Mucosa of descending colon (tissue), 3 donors: ENCODE measurements at regions of chr9 and their contacts with region 1.

Region 1: GRCh38 chr9:135085830-135086546 is 1.5 kb upstream of the OLFM1 start:
- DNase-seq: peak; percentile 67 to 89 (median 88)
- ATAC-seq: peak; percentile 83
- H3K4me3 ChIP-seq: no peak overlapping the region
- H3K4me1 ChIP-seq: peaks cover 20% of the 10 kb centered on the region
- CTCF ChIP-seq: peak; percentile 78

Region 2: DNA sequence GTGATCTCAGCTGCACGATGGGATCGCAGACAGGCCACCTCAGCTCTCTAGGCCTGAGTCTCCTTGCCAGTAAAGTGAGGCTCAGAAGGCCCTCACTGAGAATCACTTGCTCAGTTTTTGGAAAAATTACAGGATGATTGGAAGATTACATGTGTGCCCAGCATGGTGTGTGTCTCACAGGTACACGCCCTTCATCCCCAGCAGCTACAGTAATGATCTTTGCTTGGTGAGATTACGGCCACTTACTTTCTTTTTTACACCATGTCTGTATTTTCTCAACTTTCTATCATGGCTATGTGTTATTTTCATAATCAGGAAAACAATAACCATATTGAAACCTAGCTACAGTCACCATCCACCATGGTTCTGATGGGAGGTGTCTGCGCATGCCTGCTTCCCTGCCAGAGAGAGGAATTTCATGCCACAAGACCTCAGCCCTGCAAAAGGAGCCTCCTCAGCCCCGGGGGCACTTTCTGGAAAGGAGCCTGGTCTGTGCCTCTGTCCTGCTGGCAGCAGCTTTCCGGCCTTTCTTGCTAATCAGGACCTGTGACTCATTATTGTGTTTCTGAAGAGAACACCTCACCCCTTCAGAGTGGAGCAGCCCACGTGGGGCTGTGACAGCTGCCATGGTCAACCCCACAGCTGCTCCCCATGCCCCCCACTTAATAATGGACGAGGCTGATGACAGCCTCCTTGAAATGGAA is 62.7 kb before region 1 on chr9:
- intact Hi-C with region 1: no loop called
- DNase-seq: no peak
- ATAC-seq: no peak
- H3K4me3 ChIP-seq: no peak overlapping the region
- H3K4me1 ChIP-seq: no peaks in the 10 kb centered on the region
- CTCF ChIP-seq: no peak

Region 3: GRCh38 chr9:135037521-135038250 is 48.3 kb before region 1 on chr9:
- intact Hi-C with region 1: no loop called
- DNase-seq: no peak
- ATAC-seq: no peak
- H3K4me3 ChIP-seq: no peak overlapping the region
- H3K4me1 ChIP-seq: no peaks in the 10 kb centered on the region
- CTCF ChIP-seq: no peak

Region 4: GRCh38 chr9:135343837-135344522 is 258.0 kb after region 1 on chr9:
- intact Hi-C with region 1: loop called (anchors 5 to 10 kb)
- DNase-seq: peak; percentile 58 to 75 (median 65)
- ATAC-seq: peak; percentile 72
- H3K4me3 ChIP-seq: no peak overlapping the region
- H3K4me1 ChIP-seq: no peaks in the 10 kb centered on the region
- CTCF ChIP-seq: peak; percentile 74

Region 5: GRCh38 chr9:135410831-135411473 is 325.0 kb after region 1 on chr9:
- intact Hi-C with region 1: loop called in 1 of 2 experiments (anchors 5 kb)
- DNase-seq: no peak
- ATAC-seq: no peak
- H3K4me3 ChIP-seq: no peak overlapping the region
- H3K4me1 ChIP-seq: no peaks in the 10 kb centered on the region
- CTCF ChIP-seq: no peak